A673 (cell line): ENCODE measurements at regions of chr6 and their contacts with region 1.

Region 1: GRCh38 chr6:13336553-13336952 is 8.2 kb upstream of the TBC1D7 start:
- DNase-seq: peak; percentile 89
- H3K4me3 ChIP-seq: no peak overlapping the region
- H3K27ac ChIP-seq: no peak overlapping the region
- H3K4me1 ChIP-seq: no peaks in the 10 kb centered on the region
- H3K27me3 ChIP-seq: no peaks in the 10 kb centered on the region
- CTCF ChIP-seq: peak; percentile 91

Region 2: DNA sequence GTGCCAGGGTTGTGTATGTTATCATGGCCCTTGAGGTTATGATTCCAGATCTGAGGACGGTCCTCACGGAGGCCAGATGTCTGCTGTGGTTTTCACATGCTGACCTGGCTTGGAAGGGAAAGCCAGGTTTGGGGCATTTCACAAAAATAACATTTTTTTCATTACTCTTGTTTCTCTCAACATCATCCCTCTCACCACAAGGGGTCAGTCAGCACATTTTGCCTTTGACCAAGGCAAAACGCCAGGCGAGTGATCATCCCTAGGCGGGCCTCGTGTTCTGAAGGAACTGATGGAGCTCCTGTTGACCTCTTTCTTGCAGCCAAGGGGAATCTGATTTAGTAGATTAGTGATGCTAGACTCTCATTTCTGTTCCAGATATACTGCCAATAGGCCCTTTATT is 141.7 kb before region 1 on chr6:
- CTCF ChIA-PET with region 1: no interaction called
- POLR2A ChIA-PET with region 1: no interaction called
- intact Hi-C with region 1: loop called (anchors 2 kb)
- DNase-seq: peak; percentile 57
- H3K4me3 ChIP-seq: no peak overlapping the region
- H3K27ac ChIP-seq: no peak overlapping the region
- H3K4me1 ChIP-seq: no peaks in the 10 kb centered on the region
- H3K27me3 ChIP-seq: peaks cover 4% of the 10 kb centered on the region
- CTCF ChIP-seq: peak; percentile 55

Region 3: DNA sequence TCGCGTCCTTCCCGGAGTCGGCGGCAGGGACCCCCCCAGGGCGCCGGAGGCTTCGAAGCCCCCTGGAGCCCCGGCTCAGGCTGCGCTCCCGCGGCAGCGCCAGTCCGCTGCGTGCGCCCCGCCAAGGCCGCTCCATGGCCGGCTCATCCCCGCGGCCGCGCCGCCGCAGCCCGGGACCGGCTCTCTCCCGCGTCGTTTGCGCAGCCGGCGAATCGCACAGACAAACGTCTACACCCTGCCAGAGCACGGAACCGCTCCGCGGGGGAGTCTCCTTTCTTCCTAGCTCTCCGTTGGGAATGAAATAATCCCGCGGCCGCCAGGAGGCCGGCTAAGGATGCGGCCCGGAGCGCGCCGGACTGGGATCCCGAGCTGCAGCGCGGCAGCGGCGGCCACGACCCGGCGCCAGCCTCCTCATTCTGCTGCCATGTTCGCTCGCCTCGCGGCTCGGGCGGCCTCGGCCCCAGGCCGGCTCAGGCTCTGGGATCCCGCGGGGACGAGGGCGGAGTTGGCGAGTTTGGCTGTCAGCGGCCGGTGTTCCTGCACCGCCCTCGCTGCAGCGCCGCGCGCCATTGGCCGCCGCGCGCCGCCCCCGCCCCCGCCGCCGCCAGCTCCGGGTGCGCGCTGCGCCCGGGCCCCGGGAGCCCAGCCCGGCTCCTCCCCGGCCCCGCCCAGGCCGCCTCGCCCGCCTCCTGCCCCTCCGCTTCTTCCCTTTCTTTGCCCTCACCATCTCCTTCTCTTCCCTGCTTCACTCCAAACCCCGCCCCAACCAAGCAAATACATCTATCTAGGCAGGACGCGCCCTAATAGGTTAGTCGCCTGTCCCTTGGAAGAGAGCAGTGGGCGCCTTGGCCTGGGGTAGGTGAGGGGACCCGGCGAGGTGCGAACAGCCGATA is 150.8 kb after region 1 on chr6 and contains the start of gene GFOD1:
- CTCF ChIA-PET with region 1: no interaction called
- POLR2A ChIA-PET with region 1: no interaction called
- intact Hi-C with region 1: loop called (anchors 1 kb)
- DNase-seq: peak; percentile 93
- H3K4me3 ChIP-seq: peak within 1 kb of the TSS; percentile 69
- H3K27ac ChIP-seq: peak within 1 kb of the TSS; percentile 59
- H3K4me1 ChIP-seq: peaks cover 15% of the 10 kb centered on the region
- H3K27me3 ChIP-seq: no peaks in the 10 kb centered on the region
- CTCF ChIP-seq: no peak
- total RNA-seq, gene GFOD1: 7.5 and 8.8 TPM in 2 replicates

Region 4: GRCh38 chr6:13614926-13615798 is 278.6 kb after region 1 on chr6 and contains the start of gene NOL7:
- CTCF ChIA-PET with region 1: interaction called, 5 read pairs
- POLR2A ChIA-PET with region 1: no interaction called
- intact Hi-C with region 1: loop called (anchors 2 kb)
- DNase-seq: peak; percentile 99
- H3K4me3 ChIP-seq: peak within 1 kb of the TSS; percentile 91
- H3K27ac ChIP-seq: peak within 1 kb of the TSS; percentile 93
- H3K4me1 ChIP-seq: peaks cover 18% of the 10 kb centered on the region
- H3K27me3 ChIP-seq: no peaks in the 10 kb centered on the region
- CTCF ChIP-seq: peak; percentile 98
- total RNA-seq, gene NOL7: 95.9 and 102 TPM in 2 replicates